HEK293 (cell line): ENCODE measurements at regions of chr11 and their contacts with region 1.

Region 1: GRCh38 chr11:8813658-8814057 is 97.3 kb upstream of the AKIP1 start:
- H3K4me3 ChIP-seq: no peak overlapping the region
- H3K27ac ChIP-seq: no peak overlapping the region
- H3K4me1 ChIP-seq: no peaks in the 10 kb centered on the region
- CTCF ChIP-seq: peak; percentile 28; the same call in 1 of the 2 replicates

Region 2: DNA sequence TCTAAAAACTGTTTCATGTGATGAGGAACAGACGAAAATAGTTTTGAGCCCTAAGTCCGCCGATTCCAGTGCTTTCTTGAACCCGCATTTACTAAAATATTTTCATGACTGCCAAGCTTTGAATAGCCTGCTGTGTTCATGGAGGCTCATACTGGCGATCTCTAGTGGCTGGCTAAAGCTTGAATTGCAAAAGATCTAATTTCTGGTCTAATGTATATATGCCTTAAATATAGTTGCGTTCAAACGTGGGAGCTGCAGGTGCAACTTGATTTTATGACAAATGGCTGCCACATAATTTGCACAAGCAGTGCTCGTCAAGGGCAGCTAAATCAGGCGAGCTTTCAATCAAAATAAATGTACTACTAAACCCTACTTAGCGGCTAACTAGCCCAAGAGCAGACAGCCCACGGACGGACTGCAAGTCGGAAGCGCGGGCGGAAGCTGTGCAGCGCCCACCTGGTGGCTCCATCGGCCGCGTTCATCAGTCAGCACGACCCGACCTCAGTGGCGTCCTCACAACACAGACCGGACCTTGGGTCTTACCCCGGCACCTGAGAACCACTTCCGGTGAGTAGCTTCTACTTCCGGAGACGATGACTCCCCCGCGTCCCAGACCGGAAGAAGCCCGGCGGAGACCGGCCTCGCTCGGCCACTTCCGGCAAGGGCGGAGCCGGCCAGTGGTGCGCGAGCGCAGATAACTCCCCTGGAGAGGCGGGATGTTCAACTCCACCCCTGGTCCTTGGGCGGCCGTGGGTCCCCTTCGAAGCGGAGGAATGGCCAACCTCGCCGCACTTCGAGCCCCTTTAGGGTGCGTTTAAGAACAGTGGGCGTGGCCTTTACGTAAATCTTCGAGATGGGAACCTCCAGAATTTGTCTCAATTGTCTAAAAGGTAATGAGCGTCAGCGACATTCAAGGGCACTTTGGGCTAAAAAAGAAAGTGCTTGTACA is 125.0 kb before region 1 on chr11:
- CTCF ChIA-PET with region 1: interaction called, 4 read pairs
- POLR2A ChIA-PET with region 1: interaction called, 16 read pairs
- H3K4me3 ChIP-seq: peak overlapping the region; percentile 77
- H3K27ac ChIP-seq: peak overlapping the region; percentile 55
- H3K4me1 ChIP-seq: no peaks in the 10 kb centered on the region
- CTCF ChIP-seq: peak; percentile 59

Region 3: DNA sequence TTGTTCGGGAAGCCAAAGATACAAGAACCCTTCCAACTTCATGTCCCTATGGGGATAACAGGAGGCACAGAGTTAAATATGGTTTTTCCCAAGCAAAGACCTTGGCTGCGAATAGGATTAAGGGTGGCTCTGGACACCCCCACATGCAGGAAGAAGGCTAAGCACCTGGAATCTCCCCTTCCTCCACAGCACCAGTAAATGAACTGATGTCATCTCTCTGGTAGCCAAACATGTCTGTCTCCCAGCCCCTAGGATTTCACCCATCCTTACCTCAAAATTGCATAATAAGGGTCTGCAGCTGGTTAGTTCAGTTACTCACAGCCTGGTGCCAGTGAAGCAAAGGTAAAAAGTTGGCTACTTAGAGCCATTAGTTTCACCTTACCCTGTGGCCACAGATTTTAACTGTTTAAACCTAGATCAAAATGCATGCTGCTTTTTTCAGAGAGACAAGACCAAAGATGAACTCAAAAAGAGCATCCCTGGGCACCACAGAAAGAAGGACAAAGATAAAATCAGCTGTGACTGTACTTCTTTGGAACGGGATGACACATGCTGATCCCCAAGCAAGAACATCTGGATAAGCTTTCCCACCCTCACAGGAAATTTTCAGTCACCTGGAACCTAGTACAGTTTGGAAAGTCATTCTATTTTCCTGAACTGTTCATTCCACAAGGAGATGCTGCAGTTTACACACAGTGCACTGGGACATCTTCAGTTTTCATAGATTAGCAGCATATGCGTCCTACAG is 20.1 kb after region 1 on chr11:
- CTCF ChIA-PET with region 1: interaction called, 10 read pairs
- POLR2A ChIA-PET with region 1: interaction called, 3 read pairs
- H3K4me3 ChIP-seq: no peak overlapping the region
- H3K27ac ChIP-seq: no peak overlapping the region
- H3K4me1 ChIP-seq: no peaks in the 10 kb centered on the region
- CTCF ChIP-seq: no peak

Region 4: GRCh38 chr11:8913961-8914660 is 100.5 kb after region 1 on chr11:
- CTCF ChIA-PET with region 1: no interaction called
- POLR2A ChIA-PET with region 1: no interaction called
- H3K4me3 ChIP-seq: no peak overlapping the region
- H3K27ac ChIP-seq: no peak overlapping the region
- H3K4me1 ChIP-seq: no peaks in the 10 kb centered on the region
- CTCF ChIP-seq: 0 out of 2 replicates have a peak, but pooled peaks have one; percentile 33

Region 5: DNA sequence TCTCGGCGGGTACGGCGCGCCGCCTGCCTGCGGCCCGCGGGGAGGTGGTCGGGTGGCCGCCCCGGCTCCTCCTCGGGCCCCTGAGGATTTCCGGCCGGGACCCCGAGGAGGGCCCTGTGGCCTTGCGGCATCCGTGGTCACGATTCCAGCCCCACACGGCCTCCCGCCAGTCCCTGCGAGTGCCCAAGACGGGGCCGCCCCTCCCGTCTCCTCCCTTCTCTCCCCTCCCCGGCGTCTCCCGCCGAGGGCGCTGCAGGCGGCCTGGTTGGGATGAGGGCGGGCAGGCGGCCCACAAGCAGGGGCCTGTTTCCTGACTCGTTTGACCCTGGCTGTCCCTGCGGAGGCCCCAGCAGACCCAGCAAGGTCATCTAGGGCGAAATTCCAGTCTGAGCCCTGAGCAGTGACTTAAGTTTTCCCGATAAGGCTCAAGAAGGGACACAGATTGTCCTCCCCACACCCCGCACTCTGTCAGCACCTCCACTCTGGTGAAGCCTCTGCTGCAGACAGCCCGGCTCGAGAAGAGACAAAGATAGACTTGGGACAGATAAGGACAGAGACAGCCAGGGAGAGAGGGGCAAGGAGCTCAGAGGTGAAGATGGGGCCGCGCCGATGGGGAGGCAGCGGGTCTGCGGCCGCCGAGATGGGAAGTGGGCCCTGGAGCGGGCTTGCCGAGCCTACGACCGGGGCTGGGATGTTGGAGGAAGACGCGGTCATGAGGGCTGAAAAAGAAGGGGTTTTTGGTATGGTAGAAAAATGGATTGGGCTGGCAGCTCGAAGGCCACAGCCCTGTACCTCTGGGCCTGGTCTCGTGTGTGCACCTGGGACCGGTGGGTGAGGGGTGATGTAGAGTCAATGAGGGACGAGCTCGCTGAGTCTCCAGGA is 945.2 kb after region 1 on chr11:
- CTCF ChIA-PET with region 1: no interaction called
- POLR2A ChIA-PET with region 1: no interaction called
- H3K4me3 ChIP-seq: peak overlapping the region; percentile 69
- H3K27ac ChIP-seq: peak overlapping the region; percentile 82
- H3K4me1 ChIP-seq: no peaks in the 10 kb centered on the region
- CTCF ChIP-seq: no peak